Tibial artery (tissue), 4 donors: ENCODE measurements at regions of chr9 and their contacts with region 1.

Region 1: GRCh38 chr9:76297721-76298239 is 96.4 kb downstream of the RFK start:
- DNase-seq: peak; percentile 45 to 67
- H3K4me3 ChIP-seq: peak overlapping the region in 1 of 2 donors; percentile 25
- H3K27ac ChIP-seq: peak overlapping the region in 1 of 2 donors; percentile 2
- H3K4me1 ChIP-seq: peaks cover 0 to 14% (median 8%) of the 10 kb centered on the region in 4 donors
- H3K27me3 ChIP-seq: no peaks in the 10 kb centered on the region
- CTCF ChIP-seq: no peak

Region 2: GRCh38 chr9:75265525-75265972 is 1032.2 kb before region 1 on chr9:
- intact Hi-C with region 1: loop called (anchors 10 kb)
- DNase-seq: peak in 1 of 2 donors; percentile 51
- H3K4me3 ChIP-seq: no peak overlapping the region
- H3K27ac ChIP-seq: no peak overlapping the region
- H3K4me1 ChIP-seq: peaks cover 0 to 28% (median 0%) of the 10 kb centered on the region in 4 donors
- H3K27me3 ChIP-seq: no peaks in the 10 kb centered on the region
- CTCF ChIP-seq: peak; percentile 87 to 90

Region 3: DNA sequence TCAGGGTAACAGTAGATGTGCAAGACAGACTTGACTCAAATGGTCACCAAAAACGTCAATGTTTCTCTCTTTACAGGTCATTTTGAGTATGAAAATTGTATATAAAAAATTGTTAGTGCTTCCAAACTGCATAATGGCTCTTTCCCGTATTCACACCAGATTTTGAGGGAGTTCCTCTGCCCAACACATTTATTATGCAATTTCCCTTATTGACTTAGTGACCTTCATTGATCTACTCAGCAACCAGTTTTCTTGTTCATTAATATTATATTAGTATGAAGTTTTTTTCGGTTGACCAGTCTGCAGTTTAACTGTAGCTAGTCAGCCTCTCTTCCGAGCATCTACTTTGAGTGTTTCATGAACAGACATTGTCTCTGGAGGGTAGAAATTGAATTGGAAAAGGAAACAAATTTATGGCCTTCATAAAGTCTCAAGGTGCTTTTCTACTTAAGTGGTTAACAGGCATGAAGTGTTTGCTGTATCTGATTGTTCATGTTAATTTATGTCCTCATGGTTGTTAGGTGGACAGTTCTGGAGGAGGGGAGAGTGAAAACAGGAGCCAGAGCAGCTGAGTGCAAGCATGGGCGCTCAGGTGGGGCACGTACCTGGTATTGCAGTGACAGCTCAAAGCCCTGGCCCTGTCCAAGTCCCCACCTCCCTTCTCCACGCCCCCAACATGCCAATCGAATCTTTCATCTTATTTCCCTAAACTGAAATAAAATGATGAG is 143.7 kb before region 1 on chr9:
- intact Hi-C with region 1: loop called (anchors 10 kb)
- DNase-seq: no peak
- H3K4me3 ChIP-seq: no peak overlapping the region
- H3K27ac ChIP-seq: no peak overlapping the region
- H3K4me1 ChIP-seq: no peaks in the 10 kb centered on the region
- H3K27me3 ChIP-seq: no peaks in the 10 kb centered on the region
- CTCF ChIP-seq: no peak

Region 4: GRCh38 chr9:76351006-76351405 is 53.2 kb after region 1 on chr9:
- intact Hi-C with region 1: no loop called
- DNase-seq: no peak
- H3K4me3 ChIP-seq: no peak overlapping the region
- H3K27ac ChIP-seq: no peak overlapping the region
- H3K4me1 ChIP-seq: no peaks in the 10 kb centered on the region
- H3K27me3 ChIP-seq: no peaks in the 10 kb centered on the region
- CTCF ChIP-seq: no peak